ENCODE measurements at regions of chr15 and their contacts with region 1.

Region 1: GRCh38 chr15:49521794-49522193 is 98.8 kb downstream of the FGF7 start:
- DNase-seq: peak; percentile 33
- ATAC-seq: no peak; the same call in none of the 2 replicates
- H3K4me3 ChIP-seq: no peak overlapping the region
- H3K27ac ChIP-seq: no peak overlapping the region
- H3K4me1 ChIP-seq: no peaks in the 10 kb centered on the region
- H3K27me3 ChIP-seq: no peaks in the 10 kb centered on the region
- CTCF ChIP-seq: 0 out of 2 replicates have a peak, but pooled peaks have one; percentile 19
- POLR2A ChIP-seq: no peak
- RAD21 ChIP-seq: no peak

Region 2: DNA sequence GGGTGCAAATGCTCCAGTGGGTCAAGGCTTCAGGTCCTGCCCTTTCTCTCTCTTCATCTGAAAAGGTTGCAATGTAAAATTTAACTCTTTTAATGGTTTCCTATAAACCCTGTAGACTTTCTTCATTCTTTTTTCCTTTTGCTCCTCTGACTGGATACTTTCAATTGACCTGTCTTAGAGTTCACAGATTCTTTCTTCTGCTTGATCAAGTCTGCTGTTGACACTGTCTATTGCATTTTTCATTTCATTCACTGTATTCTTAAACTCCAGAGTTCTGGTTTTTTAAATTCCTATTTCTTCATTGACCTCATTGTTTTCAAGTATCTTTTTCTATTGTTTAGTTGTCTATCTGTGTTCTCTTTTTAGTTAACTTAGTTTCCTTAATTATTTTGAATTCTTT is 16.7 kb after region 1 on chr15:
- CTCF ChIA-PET with region 1: no interaction called
- POLR2A ChIA-PET with region 1: no interaction called
- dilution Hi-C with region 1: no loop called
- in situ Hi-C with region 1: no loop called
- intact Hi-C with region 1: no loop called
- DNase-seq: no peak
- ATAC-seq: no peak
- H3K4me3 ChIP-seq: no peak overlapping the region
- H3K27ac ChIP-seq: no peak overlapping the region
- H3K4me1 ChIP-seq: no peaks in the 10 kb centered on the region
- H3K27me3 ChIP-seq: no peaks in the 10 kb centered on the region
- CTCF ChIP-seq: no peak
- POLR2A ChIP-seq: no peak
- RAD21 ChIP-seq: no peak

Region 3: GRCh38 chr15:49573421-49573820 is 51.6 kb after region 1 on chr15:
- CTCF ChIA-PET with region 1: no interaction called
- POLR2A ChIA-PET with region 1: no interaction called
- dilution Hi-C with region 1: no loop called
- in situ Hi-C with region 1: no loop called
- intact Hi-C with region 1: loop called (anchors 10 kb)
- DNase-seq: no peak
- ATAC-seq: no peak
- H3K4me3 ChIP-seq: no peak overlapping the region
- H3K27ac ChIP-seq: no peak overlapping the region
- H3K4me1 ChIP-seq: no peaks in the 10 kb centered on the region
- H3K27me3 ChIP-seq: no peaks in the 10 kb centered on the region
- CTCF ChIP-seq: no peak
- POLR2A ChIP-seq: no peak
- RAD21 ChIP-seq: no peak

Region 4: GRCh38 chr15:49589030-49589429 is 67.2 kb after region 1 on chr15:
- CTCF ChIA-PET with region 1: no interaction called
- POLR2A ChIA-PET with region 1: no interaction called
- dilution Hi-C with region 1: no loop called
- in situ Hi-C with region 1: no loop called
- intact Hi-C with region 1: loop called (anchors 10 kb)
- DNase-seq: peak; percentile 0
- ATAC-seq: no peak
- H3K4me3 ChIP-seq: no peak overlapping the region
- H3K27ac ChIP-seq: no peak overlapping the region
- H3K4me1 ChIP-seq: no peaks in the 10 kb centered on the region
- H3K27me3 ChIP-seq: no peaks in the 10 kb centered on the region
- CTCF ChIP-seq: no peak
- POLR2A ChIP-seq: no peak
- RAD21 ChIP-seq: no peak